Activated CD4-positive, alpha-beta T cell treated with anti-CD3 and anti-CD28 coated beads for 36 hours (primary cell): ENCODE measurements at regions of chr11 and their contacts with region 1.

Region 1: DNA sequence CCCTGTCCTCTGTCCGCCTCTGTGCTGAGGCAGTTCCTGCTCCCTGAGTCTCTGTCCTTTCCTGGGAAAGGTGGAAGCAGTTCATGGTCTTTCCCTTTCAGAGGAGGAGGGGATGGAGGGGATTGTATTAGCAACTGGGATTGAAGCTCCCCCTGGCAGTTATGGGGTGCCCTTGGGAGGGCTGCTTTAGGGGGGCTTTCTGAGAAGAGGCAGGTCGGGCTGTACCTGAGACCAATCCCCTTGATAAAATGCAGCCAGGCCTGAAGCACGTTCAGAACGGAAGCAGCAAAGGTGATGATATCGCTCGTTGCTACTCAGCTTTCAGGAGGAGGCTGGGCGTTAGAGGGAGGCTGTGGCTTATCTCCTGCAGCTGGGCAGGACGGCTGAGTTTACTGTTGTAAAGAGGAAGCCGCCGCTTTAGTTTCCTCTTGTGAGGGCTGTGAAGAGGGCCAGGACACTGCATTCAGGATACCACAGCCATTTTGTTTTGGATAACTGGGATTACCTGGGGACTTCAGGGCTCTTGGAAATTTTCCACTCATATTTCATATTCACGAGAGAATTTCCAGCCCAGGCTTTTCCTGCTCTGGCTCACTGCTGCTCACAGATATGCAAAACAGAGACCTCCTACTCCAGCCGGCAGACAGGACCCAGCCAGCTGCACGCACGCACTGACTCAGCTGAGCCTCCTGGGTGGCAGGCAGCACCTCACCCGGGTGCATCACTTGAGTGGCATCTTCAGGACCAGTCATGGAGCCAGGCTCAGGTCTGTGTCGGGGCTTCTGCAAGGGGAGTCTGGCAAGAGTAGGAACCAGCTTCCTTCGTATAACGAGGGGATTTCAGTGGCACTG is 798 bp downstream of the AMPD3 start:
- DNase-seq: peak; percentile 91
- ATAC-seq: peak; percentile 80
- H3K4me3 Mint-ChIP-seq: peak overlapping the region; percentile 91
- H3K27ac Mint-ChIP-seq: peak overlapping the region; percentile 98
- H3K4me1 Mint-ChIP-seq: peaks cover 88% of the 10 kb centered on the region
- H3K27me3 Mint-ChIP-seq: no peaks in the 10 kb centered on the region

Region 2: GRCh38 chr11:9936754-9937153 is 519.1 kb before region 1 on chr11:
- CTCF ChIA-PET with region 1: no interaction called
- POLR2A ChIA-PET with region 1: no interaction called
- intact Hi-C with region 1: no loop called
- DNase-seq: no peak
- ATAC-seq: no peak
- H3K4me3 Mint-ChIP-seq: no peak overlapping the region
- H3K27ac Mint-ChIP-seq: no peak overlapping the region
- H3K4me1 Mint-ChIP-seq: no peaks in the 10 kb centered on the region
- H3K27me3 Mint-ChIP-seq: no peaks in the 10 kb centered on the region

Region 3: DNA sequence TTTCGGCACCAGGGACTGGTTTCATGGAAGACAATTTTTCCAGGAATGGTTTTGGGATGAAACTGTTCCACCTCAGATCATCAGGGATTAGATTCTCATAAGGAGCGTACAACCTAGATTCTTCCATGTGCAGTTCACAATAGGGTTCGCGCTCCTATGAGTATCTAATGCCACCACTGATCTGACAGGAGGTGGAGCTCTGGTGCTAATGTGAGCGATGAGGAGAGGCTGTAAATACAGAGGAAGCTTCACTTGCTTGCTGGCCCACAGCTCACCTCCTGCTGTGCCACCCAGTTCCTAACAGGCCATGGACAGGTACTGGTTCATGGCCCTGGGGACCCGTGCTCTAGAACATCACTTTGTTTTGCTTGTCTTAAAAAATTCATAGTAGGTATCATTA is 42.6 kb before region 1 on chr11:
- CTCF ChIA-PET with region 1: interaction called, 10 read pairs
- POLR2A ChIA-PET with region 1: no interaction called
- intact Hi-C with region 1: loop called (anchors 1 to 2 kb)
- DNase-seq: peak; percentile 70
- ATAC-seq: peak; percentile 94
- H3K4me3 Mint-ChIP-seq: no peak overlapping the region
- H3K27ac Mint-ChIP-seq: no peak overlapping the region
- H3K4me1 Mint-ChIP-seq: peaks cover 32% of the 10 kb centered on the region
- H3K27me3 Mint-ChIP-seq: no peaks in the 10 kb centered on the region

Region 4: DNA sequence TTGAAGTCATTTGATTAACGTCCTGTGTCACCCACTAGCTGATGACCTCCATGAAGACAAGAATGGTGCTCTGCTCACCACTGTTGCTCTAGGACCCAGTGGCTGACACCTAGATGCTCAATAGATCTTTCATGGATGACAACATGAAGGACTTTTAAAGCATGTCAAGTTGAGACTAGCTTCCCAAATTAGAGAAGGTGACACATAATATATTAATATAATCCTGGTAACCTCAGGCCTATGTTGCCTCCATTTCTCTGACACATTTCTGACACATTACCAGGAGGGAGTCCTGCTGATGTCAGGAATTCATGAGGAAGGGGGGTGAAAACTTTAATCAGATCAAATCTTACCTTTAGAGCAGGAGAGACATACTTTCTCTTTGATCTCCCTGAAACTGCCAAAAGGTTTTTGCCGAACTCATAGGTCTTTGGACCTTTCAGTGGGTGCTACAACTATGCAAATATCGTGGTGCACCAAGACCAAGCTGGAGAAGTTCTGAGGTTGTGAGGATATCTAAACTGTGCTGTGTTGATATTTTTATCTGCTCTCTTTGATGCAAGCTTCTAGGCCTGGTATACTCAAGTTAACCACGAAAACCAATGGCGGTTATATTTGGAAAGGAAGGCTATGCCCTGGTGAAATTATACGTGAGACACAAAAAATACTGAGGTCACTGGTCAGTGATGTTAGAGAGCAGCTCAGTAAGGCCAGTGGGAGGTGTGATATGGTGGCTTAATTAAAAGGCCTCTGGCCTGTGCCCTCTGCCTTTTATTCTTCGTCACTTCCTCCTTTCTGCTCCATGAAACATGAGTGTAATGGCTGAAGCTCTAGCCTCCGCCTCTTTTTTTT is 14.0 kb before region 1 on chr11:
- CTCF ChIA-PET with region 1: interaction called, 7 read pairs
- POLR2A ChIA-PET with region 1: interaction called, 5 read pairs
- intact Hi-C with region 1: loop called in 1 of 2 experiments (anchors 2 kb)
- DNase-seq: no peak
- ATAC-seq: peak; percentile 33
- H3K4me3 Mint-ChIP-seq: no peak overlapping the region
- H3K27ac Mint-ChIP-seq: peak overlapping the region; percentile 3
- H3K4me1 Mint-ChIP-seq: peaks cover 28% of the 10 kb centered on the region
- H3K27me3 Mint-ChIP-seq: peaks cover 1% of the 10 kb centered on the region

Region 5: GRCh38 chr11:10526974-10527918 is 71.4 kb after region 1 on chr11:
- CTCF ChIA-PET with region 1: no interaction called
- POLR2A ChIA-PET with region 1: no interaction called
- intact Hi-C with region 1: loop called in 1 of 2 experiments (anchors 5 kb)
- DNase-seq: no peak
- ATAC-seq: peak; percentile 96
- H3K4me3 Mint-ChIP-seq: peak overlapping the region; percentile 9
- H3K27ac Mint-ChIP-seq: peak overlapping the region; percentile 83
- H3K4me1 Mint-ChIP-seq: peaks cover 22% of the 10 kb centered on the region
- H3K27me3 Mint-ChIP-seq: no peaks in the 10 kb centered on the region

Region 6: DNA sequence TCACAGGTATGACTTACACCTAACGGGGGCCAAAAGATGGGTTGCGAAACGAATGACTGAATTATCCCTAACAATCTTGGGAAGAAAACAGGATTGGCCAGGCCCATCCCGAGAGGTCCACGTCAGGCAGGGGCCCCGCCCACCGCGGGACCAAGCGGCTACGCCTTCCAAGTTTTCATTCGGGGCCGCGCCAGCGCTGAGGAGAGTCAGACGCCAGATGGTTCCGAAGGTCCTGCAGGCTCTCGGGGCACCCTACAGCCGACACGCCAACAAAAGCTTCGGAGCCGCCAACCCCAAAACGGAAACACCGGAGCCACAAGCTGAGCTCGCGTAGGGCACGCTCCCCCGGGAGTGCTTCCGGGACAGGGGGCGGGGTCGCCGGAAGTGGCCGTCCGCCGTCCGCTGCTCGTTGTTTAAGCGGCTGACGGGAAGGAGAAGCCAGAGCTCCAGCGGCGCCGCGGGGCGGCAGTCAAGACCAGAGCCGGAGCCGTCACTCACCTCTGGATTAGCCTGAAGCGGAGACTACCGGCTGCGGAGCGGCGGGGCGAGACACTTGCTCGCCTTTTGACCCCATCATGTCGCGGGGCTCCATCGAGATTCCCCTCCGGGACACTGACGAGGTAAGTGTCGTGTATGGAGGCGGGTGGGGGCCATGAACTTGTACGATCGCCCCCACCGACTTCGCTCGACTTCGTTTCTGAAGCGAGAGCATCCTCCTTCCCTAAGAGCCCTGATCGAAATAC is 295.1 kb after region 1 on chr11 and contains the start of gene CTR9:
- CTCF ChIA-PET with region 1: interaction called, 3 read pairs
- POLR2A ChIA-PET with region 1: no interaction called
- intact Hi-C with region 1: loop called (anchors 1 to 5 kb)
- DNase-seq: peak; percentile 97
- ATAC-seq: peak; percentile 92
- H3K4me3 Mint-ChIP-seq: peak within 1 kb of the TSS; percentile 96
- H3K27ac Mint-ChIP-seq: peak within 1 kb of the TSS; percentile 92
- H3K4me1 Mint-ChIP-seq: peaks cover 16% of the 10 kb centered on the region
- H3K27me3 Mint-ChIP-seq: no peaks in the 10 kb centered on the region
- total RNA-seq, gene CTR9: 39.7 to 43.9 TPM

Region 7: DNA sequence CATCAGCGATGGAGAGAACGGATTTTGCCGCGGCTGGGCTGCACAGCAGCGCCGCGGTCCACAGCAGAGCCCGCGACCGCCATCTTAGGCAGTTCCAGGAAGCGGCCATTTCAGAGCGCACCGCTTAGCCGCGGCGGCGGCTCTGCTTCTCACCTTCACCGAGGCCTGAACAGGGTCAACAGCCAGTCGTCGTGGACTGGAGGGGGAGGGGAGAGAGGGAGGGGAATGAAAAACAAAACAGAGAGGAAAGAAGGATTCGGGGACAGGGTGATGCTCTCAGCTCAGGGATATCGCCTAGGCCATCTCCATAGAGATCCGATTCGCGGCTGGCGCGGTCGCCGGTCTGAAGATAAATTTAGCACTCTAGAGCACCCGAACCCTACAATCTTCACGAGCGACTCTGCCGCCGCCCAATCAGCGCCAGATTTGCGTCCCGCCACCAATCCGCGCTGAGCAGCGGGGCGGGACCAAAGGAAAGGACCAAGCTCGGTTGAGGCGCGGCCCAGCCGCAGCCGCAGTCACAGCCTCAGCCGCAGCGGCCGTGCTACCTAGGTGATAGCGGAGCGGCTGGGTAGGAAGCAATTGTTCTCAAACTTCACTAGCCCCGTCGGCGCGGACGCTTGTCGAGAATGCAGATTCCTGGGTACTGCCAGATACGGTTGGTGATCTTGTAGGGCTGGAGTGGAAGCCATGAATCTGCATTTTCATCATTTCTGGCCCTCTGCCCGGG is 402.0 kb after region 1 on chr11 and contains the start of gene ZBED5:
- CTCF ChIA-PET with region 1: no interaction called
- POLR2A ChIA-PET with region 1: no interaction called
- intact Hi-C with region 1: loop called (anchors 5 kb)
- DNase-seq: peak; percentile 98
- ATAC-seq: peak; percentile 93
- H3K4me3 Mint-ChIP-seq: peak within 1 kb of the TSS; percentile 100
- H3K27ac Mint-ChIP-seq: peak within 1 kb of the TSS; percentile 100
- H3K4me1 Mint-ChIP-seq: peaks cover 40% of the 10 kb centered on the region
- H3K27me3 Mint-ChIP-seq: no peaks in the 10 kb centered on the region
- total RNA-seq, gene ZBED5: 34.1 to 44.3 TPM